Activated naive CD4-positive, alpha-beta T cell treated with anti-CD3 and anti-CD28 coated beads for 36 hours (primary cell): ENCODE measurements at regions of chr6 and their contacts with region 1.

Region 1: DNA sequence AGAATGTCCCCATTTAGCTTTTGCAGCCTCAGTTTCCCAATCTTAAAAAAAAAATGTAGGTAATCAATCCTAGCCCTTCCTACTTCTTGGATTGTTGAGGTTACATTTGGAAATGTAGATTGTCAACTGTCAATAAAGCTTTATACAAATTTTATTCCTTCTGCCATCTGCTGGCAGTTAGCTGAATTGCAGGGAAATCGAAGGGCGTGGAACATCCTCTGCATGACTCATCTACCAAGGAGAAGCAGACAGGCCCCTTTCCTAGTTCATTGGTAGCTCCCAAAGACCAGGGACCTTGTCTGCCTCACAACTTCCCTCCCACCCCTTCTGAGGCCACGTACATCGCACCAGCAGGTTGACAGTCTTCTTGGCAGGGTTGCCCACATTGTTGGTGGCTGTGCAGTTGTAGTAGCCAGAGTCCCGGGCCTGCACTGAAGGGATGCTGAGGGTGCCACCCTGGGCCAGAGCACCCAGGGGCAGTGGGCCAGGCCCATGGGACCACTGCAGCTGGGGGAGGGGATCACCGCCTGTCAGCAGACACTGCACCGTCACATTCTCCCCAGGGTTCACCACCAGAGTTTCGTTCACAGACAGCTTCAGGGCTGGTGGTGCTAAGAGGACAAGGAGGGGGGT is 43.6 kb downstream of the MDGA1 start:
- DNase-seq: peak; percentile 82
- H3K4me3 Mint-ChIP-seq: no peak overlapping the region
- H3K27ac Mint-ChIP-seq: no peak overlapping the region
- H3K4me1 Mint-ChIP-seq: peaks cover 10% of the 10 kb centered on the region
- H3K27me3 Mint-ChIP-seq: no peaks in the 10 kb centered on the region

Region 2: DNA sequence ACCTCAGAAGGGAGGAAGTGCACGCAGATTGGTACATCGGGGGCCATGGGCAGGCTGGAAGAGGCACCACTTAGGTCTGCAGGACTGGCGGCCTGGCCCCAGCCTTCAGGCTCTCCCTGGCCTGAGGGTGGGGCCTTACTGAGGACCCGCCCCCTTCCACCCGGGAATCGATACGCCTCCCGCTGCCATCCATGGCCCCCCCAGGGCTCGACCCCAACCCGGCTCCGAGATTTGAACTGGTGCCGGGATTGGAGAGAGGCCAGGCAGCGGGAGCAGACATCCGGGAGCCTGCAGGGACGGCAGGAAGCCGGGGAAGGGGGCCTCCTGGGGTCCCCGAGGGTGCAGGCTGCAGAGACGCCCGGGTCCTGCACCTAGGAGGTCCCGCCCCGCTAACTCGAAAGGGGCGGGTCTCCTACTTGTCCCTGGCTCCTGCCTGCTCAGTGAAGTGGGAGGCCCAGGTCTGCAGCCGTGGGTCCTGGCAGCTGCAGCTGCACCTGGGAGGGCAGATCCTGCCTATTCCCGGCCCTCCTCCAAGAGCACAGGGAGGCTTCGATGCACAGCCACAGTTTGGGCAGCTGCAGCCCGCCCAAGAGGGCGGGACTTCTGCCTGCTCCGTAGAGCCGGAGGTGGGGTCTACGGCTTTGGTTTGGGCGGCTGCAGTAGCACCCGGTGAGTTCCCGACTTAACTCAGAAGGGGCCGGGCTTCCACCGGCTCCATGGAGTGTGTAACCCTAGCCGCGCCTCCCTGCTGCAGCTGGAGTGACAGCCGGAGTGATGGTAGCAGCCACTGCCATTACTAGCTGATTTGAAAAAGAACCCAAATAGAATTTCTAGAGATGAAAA is 431.7 kb before region 1 on chr6:
- CTCF ChIA-PET with region 1: no interaction called
- intact Hi-C with region 1: no loop called
- DNase-seq: peak; percentile 90
- H3K4me3 Mint-ChIP-seq: peak overlapping the region; percentile 56
- H3K27ac Mint-ChIP-seq: peak overlapping the region; percentile 26
- H3K4me1 Mint-ChIP-seq: peaks cover 24% of the 10 kb centered on the region
- H3K27me3 Mint-ChIP-seq: no peaks in the 10 kb centered on the region

Region 3: DNA sequence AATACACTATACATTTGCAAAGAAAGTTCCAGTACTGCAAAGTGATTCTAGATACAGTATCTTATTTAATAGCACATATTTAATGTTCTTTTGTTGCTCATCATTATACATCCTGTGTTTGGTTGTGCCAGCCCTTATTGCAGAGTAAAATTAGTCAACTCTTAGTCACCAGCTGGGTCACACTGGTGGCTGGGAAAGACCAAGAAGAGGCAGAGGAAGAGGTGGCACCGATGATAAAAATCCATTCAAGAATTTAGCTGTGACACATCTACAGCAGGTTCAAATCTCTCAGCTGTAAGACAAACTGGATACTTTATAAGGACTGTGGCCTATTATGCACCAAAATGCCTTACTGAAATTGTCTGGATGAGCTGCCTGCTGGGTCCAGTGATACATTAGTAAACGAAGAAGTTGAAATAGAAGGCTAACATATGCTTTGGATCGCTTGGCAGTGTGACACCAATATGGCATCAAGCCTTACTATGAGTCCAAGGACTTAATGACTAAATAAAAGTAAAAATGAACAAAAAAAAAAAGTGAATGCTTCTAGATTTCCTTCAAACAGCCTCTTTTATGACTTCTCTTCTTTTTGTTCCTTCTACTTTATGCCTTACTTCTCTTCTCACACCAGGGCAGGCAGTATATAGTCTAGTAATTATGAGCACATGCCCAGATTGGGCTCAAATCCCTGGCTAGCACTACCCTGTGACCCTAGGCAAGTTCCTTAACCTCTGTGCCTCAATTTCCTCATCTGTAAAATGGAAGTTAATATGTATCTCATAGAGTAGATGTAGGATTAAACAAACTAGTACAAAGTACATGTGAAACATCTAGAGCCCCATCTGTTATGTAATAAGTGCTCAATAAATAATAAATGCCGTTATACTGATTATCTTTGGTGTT is 329.7 kb before region 1 on chr6:
- CTCF ChIA-PET with region 1: interaction called, 6 read pairs
- intact Hi-C with region 1: loop called (anchors 1 kb)
- DNase-seq: peak; percentile 66
- H3K4me3 Mint-ChIP-seq: no peak overlapping the region
- H3K27ac Mint-ChIP-seq: no peak overlapping the region
- H3K4me1 Mint-ChIP-seq: peaks cover 20% of the 10 kb centered on the region
- H3K27me3 Mint-ChIP-seq: no peaks in the 10 kb centered on the region

Region 4: GRCh38 chr6:37483917-37484785 is 169.9 kb before region 1 on chr6:
- CTCF ChIA-PET with region 1: no interaction called
- intact Hi-C with region 1: loop called (anchors 1 kb)
- DNase-seq: peak; percentile 79
- H3K4me3 Mint-ChIP-seq: no peak overlapping the region
- H3K27ac Mint-ChIP-seq: no peak overlapping the region
- H3K4me1 Mint-ChIP-seq: peaks cover 14% of the 10 kb centered on the region
- H3K27me3 Mint-ChIP-seq: no peaks in the 10 kb centered on the region

Region 5: GRCh38 chr6:37594895-37595294 is 59.2 kb before region 1 on chr6:
- CTCF ChIA-PET with region 1: no interaction called
- intact Hi-C with region 1: no loop called
- DNase-seq: no peak
- H3K4me3 Mint-ChIP-seq: no peak overlapping the region
- H3K27ac Mint-ChIP-seq: no peak overlapping the region
- H3K4me1 Mint-ChIP-seq: no peaks in the 10 kb centered on the region
- H3K27me3 Mint-ChIP-seq: no peaks in the 10 kb centered on the region

Region 6: GRCh38 chr6:37630281-37630799 is 23.7 kb before region 1 on chr6:
- CTCF ChIA-PET with region 1: interaction called, 10 read pairs
- intact Hi-C with region 1: no loop called
- DNase-seq: no peak
- H3K4me3 Mint-ChIP-seq: no peak overlapping the region
- H3K27ac Mint-ChIP-seq: no peak overlapping the region
- H3K4me1 Mint-ChIP-seq: peaks cover 4% of the 10 kb centered on the region
- H3K27me3 Mint-ChIP-seq: peaks cover 2% of the 10 kb centered on the region

Region 7: GRCh38 chr6:37640786-37641395 is 13.2 kb before region 1 on chr6:
- CTCF ChIA-PET with region 1: interaction called, 10 read pairs
- intact Hi-C with region 1: no loop called
- DNase-seq: no peak
- H3K4me3 Mint-ChIP-seq: no peak overlapping the region
- H3K27ac Mint-ChIP-seq: no peak overlapping the region
- H3K4me1 Mint-ChIP-seq: peaks cover 27% of the 10 kb centered on the region
- H3K27me3 Mint-ChIP-seq: no peaks in the 10 kb centered on the region

Region 8: DNA sequence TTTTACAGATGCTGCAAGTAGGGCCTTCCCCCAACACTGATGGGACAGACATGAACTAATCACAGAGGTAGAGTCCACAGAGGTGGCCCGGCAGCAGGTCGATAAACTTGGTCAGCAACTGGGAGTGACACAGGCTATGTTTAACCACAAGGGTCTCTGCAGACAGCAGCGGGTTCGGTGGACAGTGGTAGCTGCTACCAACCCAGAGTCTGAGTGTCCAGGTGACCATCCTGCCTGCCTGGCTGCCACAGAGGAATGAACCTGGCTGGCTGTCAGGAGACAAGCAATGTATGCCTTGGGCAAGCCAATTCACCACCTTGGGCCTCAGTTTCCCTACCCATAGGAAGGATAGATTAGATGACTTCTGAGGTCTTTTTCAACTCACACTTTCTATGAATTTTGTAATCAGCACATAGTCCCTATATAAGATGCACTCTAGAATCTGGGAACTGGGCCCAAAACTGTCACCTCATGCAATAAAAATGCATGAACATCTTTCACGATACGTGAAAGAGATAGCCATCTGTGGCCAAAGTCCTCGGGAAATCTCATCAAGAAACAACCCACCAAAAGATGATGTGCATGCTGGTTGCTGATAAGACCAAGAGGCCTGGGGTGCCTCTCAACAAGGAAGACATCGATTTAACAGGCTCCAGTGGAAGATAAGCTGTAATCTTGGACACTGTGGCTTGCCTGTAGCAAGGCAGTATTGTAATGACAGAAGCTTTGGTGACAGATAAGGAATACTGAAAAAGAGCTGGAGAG is 13.2 kb after region 1 on chr6:
- CTCF ChIA-PET with region 1: interaction called, 10 read pairs
- intact Hi-C with region 1: no loop called
- DNase-seq: no peak
- H3K4me3 Mint-ChIP-seq: no peak overlapping the region
- H3K27ac Mint-ChIP-seq: no peak overlapping the region
- H3K4me1 Mint-ChIP-seq: no peaks in the 10 kb centered on the region
- H3K27me3 Mint-ChIP-seq: no peaks in the 10 kb centered on the region

Region 9: GRCh38 chr6:37698261-37699137 is 44.5 kb after region 1 on chr6:
- CTCF ChIA-PET with region 1: no interaction called
- intact Hi-C with region 1: no loop called
- DNase-seq: peak; percentile 48
- H3K4me3 Mint-ChIP-seq: peak overlapping the region; percentile 98
- H3K27ac Mint-ChIP-seq: peak overlapping the region; percentile 82
- H3K4me1 Mint-ChIP-seq: peaks cover 18% of the 10 kb centered on the region
- H3K27me3 Mint-ChIP-seq: peaks cover 19% of the 10 kb centered on the region